Activated naive CD4-positive, alpha-beta T cell treated with anti-CD3 and anti-CD28 coated beads for 36 hours (primary cell): ENCODE measurements at regions of chr1 and their contacts with region 1.

Region 1: DNA sequence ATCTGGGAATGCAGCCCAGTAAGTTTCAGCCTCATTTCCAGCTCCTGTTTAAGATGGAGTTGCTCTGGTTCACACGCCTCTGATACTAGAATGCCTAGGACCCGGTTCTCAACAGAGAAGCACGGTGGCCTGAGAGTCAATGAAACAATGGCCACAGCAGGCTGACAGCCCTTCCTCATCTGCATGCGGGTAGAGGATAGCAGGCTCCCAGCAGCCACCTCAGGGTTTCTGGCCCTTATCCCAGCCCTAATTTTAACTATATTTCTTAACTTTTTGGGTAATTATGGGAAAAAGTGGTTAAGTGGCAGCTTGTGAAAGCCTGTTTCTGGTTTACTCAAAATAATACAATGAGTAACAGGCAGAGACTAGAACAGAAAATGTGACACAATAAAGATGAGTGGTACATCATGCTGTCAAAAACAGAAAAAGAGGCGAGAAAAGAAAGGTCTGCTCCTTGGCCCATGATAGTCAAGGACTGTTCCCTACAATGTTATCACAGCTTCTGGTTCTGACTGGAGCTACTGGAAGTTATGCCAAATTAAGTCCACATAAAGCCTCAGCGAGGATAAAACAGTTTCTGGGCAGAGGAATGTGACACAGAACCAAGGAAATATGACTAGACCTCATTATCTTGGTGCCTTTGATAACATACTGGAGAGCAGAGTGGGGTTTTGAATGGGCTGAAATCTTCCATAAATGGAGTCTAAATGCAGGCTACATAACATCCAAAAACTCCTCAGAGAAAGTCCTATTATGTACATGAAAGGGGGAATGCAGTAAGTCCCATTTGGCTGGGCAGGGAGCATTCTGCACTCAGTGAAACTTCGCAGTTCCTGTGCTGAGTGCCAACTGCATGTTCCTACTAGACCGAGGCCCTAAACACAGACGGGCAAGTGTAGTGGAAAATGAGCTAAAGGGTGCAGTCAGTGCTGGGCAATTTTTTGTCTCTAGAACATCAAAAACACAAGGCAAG is 92.1 kb downstream of the NIBAN1 start:
- DNase-seq: peak; percentile 31
- H3K4me3 Mint-ChIP-seq: no peak overlapping the region
- H3K27ac Mint-ChIP-seq: peak overlapping the region; percentile 79
- H3K4me1 Mint-ChIP-seq: peaks cover 25% of the 10 kb centered on the region
- H3K27me3 Mint-ChIP-seq: peaks cover 25% of the 10 kb centered on the region

Region 2: DNA sequence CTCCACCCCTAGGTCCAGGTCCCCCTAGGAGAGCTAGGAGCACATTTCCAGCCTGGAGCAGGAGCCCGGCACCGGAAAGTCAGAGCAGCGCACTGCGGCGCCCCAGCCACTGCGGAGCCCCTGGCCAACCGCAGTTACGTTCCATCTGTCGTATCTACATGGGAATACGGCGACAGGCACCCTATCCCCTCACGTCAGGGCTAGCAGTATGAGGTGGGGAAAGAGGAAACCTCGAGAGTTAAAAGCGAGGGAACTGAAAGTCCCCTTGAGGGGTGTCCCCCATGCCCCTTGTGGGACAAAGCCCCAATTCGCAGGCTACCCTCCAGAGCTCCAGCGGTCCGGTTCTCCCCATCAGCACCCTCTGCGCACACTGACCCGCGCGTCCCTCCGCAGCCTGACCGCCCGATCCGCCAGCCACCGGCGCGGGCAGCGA is 845.7 kb before region 1 on chr1:
- CTCF ChIA-PET with region 1: no interaction called
- intact Hi-C with region 1: loop called (anchors 10 kb)
- DNase-seq: peak; percentile 23
- H3K4me3 Mint-ChIP-seq: peak overlapping the region; percentile 58
- H3K27ac Mint-ChIP-seq: no peak overlapping the region
- H3K4me1 Mint-ChIP-seq: peaks cover 15% of the 10 kb centered on the region
- H3K27me3 Mint-ChIP-seq: peaks cover 68% of the 10 kb centered on the region

Region 3: GRCh38 chr1:184743062-184743756 is 139.0 kb before region 1 on chr1:
- CTCF ChIA-PET with region 1: no interaction called
- intact Hi-C with region 1: loop called (anchors 1 kb)
- DNase-seq: peak; percentile 18
- H3K4me3 Mint-ChIP-seq: no peak overlapping the region
- H3K27ac Mint-ChIP-seq: peak overlapping the region; percentile 43
- H3K4me1 Mint-ChIP-seq: peaks cover 53% of the 10 kb centered on the region
- H3K27me3 Mint-ChIP-seq: no peaks in the 10 kb centered on the region

Region 4: GRCh38 chr1:184754476-184755225 is 127.6 kb before region 1 on chr1 and contains the start of gene EDEM3:
- CTCF ChIA-PET with region 1: no interaction called
- intact Hi-C with region 1: loop called (anchors 1 kb)
- DNase-seq: peak; percentile 98
- H3K4me3 Mint-ChIP-seq: peak within 1 kb of the TSS; percentile 88
- H3K27ac Mint-ChIP-seq: peak within 1 kb of the TSS; percentile 88
- H3K4me1 Mint-ChIP-seq: peaks cover 36% of the 10 kb centered on the region
- H3K27me3 Mint-ChIP-seq: no peaks in the 10 kb centered on the region
- total RNA-seq, gene EDEM3: 9.9 to 10.5 TPM

Region 5: DNA sequence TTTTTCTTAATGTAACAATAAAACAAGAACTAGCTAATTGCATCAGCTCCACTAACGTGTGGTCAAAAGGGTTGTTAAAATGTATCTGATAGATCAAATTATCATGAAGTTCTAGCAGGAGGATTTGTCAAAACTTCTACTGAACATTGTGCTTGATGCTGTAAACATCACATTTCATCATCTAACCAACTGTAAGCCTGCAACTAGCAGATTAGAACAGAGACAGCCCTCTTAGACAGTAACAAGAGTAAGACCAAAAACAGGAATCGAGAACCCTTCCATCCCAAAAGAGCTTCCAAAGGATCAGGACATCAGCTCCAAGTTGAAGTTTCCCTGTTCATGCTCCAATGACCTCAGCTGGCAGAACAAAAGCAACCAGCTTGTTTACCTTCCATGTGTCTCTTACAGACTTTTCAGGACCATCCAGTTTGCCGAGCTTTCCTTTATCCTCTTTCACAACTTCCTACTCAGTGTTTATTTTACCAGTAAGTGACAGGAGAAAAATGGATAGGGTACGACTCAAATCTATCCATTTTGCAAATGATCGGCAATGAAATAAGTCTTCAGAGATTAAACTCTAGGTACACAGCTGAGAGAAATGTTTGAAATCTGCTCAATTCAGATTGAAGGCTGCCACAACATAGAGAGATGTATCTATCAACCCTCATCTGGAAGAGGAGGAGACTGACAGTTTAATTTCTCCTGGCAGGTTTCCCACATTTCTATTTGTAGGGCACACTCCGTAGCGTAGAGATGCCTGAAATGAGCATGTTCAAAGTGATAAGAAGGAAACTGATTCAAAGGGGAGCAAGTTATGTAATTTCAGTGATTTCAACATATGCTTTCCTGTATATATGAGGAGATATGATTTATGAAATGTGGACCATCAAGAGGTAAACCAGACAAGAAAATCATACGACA is 47.7 kb after region 1 on chr1:
- CTCF ChIA-PET with region 1: no interaction called
- intact Hi-C with region 1: no loop called
- DNase-seq: no peak
- H3K4me3 Mint-ChIP-seq: no peak overlapping the region
- H3K27ac Mint-ChIP-seq: no peak overlapping the region
- H3K4me1 Mint-ChIP-seq: no peaks in the 10 kb centered on the region
- H3K27me3 Mint-ChIP-seq: peaks cover 4% of the 10 kb centered on the region

Region 6: DNA sequence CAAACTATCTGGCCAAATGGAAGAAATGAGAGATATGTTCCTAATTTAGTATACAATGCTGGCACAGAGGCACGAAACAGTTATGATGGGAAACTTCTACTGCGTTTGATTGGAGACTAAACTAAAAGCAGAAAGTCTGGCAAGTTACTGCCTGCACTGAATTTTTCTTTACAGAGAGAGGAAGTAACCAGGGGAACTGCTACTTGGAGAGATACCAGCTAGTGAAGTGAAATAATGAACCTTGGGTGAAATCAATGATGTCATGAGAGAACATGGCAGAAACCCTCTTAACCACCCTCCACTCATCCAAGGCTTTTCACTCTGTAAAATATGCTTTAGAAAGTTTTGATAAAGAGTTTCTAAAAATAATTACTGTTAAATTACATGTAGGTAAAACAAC is 62.8 kb after region 1 on chr1:
- CTCF ChIA-PET with region 1: no interaction called
- intact Hi-C with region 1: loop called (anchors 1 kb)
- DNase-seq: no peak
- H3K4me3 Mint-ChIP-seq: no peak overlapping the region
- H3K27ac Mint-ChIP-seq: no peak overlapping the region
- H3K4me1 Mint-ChIP-seq: peaks cover 30% of the 10 kb centered on the region
- H3K27me3 Mint-ChIP-seq: peaks cover 13% of the 10 kb centered on the region

Region 7: DNA sequence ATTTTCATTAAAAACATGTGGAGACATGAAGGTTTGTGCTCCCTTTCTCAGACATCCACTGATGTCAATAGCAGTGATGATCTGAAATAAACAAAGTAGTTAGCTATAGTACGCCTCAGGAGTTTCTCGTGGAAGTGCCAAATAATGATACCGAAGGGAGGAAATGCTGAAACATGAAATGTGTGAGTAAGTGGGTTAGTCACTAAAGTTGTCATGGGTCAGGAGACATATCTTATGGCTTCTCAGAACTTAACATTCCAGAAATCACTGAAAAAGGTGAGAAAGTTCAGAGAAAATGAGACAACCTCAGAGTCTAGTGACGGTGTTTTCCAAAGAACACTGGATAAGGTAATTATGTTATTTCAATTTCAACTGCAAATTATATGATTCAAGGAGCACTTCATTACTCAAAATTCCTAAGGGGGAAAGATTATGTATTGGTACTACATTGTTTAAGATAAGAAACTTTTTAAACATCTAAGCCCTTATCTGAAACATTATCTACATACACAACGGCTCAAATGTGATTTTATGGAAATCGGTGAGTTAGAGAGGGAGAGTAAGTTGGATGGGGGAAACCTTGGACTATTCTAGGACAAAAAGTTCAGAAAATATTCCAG is 71.5 kb after region 1 on chr1:
- CTCF ChIA-PET with region 1: no interaction called
- intact Hi-C with region 1: loop called (anchors 1 kb)
- DNase-seq: no peak
- H3K4me3 Mint-ChIP-seq: no peak overlapping the region
- H3K27ac Mint-ChIP-seq: no peak overlapping the region
- H3K4me1 Mint-ChIP-seq: peaks cover 12% of the 10 kb centered on the region
- H3K27me3 Mint-ChIP-seq: peaks cover 1% of the 10 kb centered on the region